Activated T-helper 1 cell treated with anti-CD3 and anti-CD28 coated beads, Interleukin-12 subunit alpha, Interleukin-12 subunit beta, Interleukin-2, Interleukin-4 antibody, amounts not matched to agents 30 ng/mL and 10 ng/mL and 1 ng/mL, durations not matched to agents 14 hours and 24 hours and 36 hours (primary cell): ENCODE measurements at regions of chr12 and their contacts with region 1.

Region 1: GRCh38 chr12:69470189-69471075 is at the start of gene FRS2:
- DNase-seq: peak; percentile 79
- H3K4me3 Mint-ChIP-seq: peak within 1 kb of the TSS; percentile 98
- H3K27ac Mint-ChIP-seq: peak within 1 kb of the TSS; percentile 97
- H3K4me1 Mint-ChIP-seq: peaks cover 50% of the 10 kb centered on the region
- H3K27me3 Mint-ChIP-seq: no peaks in the 10 kb centered on the region
- total RNA-seq, gene FRS2: 13.1 and 13.7 TPM in 2 replicates

Region 2: DNA sequence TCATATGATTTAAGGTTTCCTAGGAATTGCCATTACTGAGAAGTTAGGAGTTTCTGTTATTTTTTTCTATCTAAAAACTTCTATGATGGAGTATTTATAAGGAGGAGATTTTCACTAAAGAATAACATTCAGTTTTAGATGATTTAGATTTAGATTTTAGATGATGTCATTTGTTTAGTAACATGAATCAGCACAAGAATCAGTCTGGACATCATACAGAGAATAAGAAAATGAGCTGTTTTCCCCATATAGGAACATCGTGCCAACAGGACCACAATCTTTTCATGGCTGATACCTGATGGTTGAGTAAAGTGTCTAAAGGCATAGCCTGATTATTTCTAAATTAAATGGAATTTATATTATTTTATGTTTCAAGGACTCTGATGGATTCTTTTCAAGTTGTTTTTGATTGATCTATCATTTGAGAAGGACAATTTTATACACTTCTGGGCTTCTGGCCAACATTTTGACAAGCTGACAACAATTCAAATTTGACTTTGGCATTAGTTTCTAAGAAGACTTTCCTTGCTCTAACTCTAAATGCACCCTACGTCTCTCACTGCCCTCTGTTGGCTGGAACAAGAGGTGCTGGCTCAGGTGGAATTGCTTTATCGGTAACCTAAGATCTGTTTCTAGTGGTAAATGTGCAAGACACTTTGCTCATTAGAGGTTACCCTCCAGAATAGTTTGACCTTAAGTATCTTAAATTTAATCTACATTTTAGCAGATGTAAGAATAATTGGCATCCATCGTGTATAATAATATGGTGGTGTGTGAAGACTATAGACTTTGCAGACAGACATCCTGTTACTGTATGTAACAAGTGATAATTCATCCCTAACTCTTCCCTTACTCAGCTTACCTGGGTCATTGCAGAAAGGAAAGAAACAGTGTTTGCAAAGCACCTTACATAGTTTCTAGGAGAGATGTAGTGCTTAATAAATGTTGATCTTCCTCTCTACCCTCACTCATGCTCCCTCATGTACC is 273.8 kb before region 1 on chr12:
- intact Hi-C with region 1: no loop called
- DNase-seq: no peak
- H3K4me3 Mint-ChIP-seq: no peak overlapping the region
- H3K27ac Mint-ChIP-seq: no peak overlapping the region
- H3K4me1 Mint-ChIP-seq: no peaks in the 10 kb centered on the region
- H3K27me3 Mint-ChIP-seq: no peaks in the 10 kb centered on the region

Region 3: DNA sequence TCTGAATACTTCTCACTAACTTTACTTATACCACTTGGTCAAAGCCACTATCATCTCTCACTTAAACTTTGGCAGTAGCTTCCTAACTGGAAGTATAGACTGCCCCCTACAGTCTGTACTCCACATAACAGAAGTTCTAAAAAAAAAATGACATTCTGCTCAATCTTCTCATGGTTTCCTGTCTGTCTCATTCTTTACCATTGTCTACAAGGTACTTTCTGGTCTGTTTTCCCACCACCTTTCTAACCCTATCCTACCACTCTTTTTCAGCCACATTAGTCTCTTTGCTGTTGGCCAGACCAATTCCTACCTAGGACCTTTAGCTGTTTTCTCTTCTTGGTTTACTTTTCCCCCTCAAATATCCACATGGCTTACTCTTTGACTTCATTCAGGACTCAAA is 216.4 kb before region 1 on chr12:
- intact Hi-C with region 1: loop called (anchors 5 kb)
- DNase-seq: no peak
- H3K4me3 Mint-ChIP-seq: no peak overlapping the region
- H3K27ac Mint-ChIP-seq: peak overlapping the region; percentile 52
- H3K4me1 Mint-ChIP-seq: peaks cover 41% of the 10 kb centered on the region
- H3K27me3 Mint-ChIP-seq: no peaks in the 10 kb centered on the region

Region 4: DNA sequence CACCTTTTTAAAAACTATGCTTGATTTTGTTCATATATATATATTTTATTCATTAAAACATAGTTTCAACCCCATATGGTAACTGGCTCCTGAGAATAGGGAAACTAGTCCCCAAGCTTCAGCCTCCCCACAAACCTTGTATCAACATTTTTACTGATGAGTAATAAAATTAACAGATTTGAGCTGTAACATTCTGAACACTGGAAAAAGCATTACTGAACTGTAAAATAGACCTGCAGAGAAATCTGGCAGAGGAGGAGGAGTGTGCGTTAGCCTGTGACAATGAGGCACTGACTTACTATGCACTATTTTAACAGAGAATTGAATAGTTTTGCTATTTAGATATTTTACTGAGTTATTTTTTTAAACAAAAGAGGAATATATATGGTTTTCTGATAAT is 42.9 kb after region 1 on chr12:
- intact Hi-C with region 1: no loop called
- DNase-seq: no peak
- H3K4me3 Mint-ChIP-seq: no peak overlapping the region
- H3K27ac Mint-ChIP-seq: no peak overlapping the region
- H3K4me1 Mint-ChIP-seq: peaks cover 39% of the 10 kb centered on the region
- H3K27me3 Mint-ChIP-seq: no peaks in the 10 kb centered on the region

Region 5: GRCh38 chr12:69534389-69534822 is 64.0 kb after region 1 on chr12:
- intact Hi-C with region 1: loop called (anchors 1 kb)
- DNase-seq: peak; percentile 20
- H3K4me3 Mint-ChIP-seq: no peak overlapping the region
- H3K27ac Mint-ChIP-seq: peak overlapping the region; percentile 79
- H3K4me1 Mint-ChIP-seq: peaks cover 24% of the 10 kb centered on the region
- H3K27me3 Mint-ChIP-seq: no peaks in the 10 kb centered on the region

Region 6: DNA sequence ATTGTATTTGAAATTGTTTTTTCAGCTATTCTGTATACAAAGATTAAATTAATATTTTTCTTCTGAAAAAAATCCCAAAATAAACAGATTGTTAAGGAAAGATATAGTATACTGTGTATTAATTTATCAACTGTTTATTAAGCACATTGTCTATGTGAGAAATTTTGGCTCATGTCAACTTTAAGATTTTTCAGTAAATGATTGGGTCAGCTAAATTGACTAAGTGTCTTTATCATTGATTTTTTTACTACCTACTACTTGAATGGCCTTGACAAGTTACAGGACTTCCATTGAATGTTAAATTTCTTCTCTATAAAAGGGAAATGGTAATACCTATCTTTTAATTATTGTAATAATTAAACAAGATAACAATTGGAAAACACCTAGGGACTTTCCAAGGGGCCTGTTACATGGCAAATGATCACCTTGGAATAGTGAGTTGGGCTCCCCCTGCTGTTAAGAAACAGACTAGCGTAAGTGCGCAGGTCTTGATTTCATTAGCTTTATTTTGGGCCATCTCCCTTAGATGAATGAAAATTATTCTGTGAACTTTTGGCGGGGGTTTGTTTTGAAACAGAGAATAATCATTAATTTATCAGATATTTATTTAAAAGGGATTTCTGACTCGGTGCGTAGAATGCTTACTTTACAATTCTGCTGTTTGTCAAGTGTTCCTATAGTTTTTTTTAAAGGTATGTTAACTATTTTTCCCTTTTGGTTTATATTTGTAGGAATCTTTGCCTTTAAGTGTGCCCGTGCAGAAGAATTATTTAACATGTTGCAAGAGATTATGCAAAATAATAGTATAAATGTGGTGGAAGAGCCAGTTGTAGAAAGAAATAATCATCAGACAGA is 100.3 kb after region 1 on chr12:
- intact Hi-C with region 1: loop called (anchors 1 kb)
- DNase-seq: peak; percentile 38
- H3K4me3 Mint-ChIP-seq: no peak overlapping the region
- H3K27ac Mint-ChIP-seq: no peak overlapping the region
- H3K4me1 Mint-ChIP-seq: peaks cover 10% of the 10 kb centered on the region
- H3K27me3 Mint-ChIP-seq: no peaks in the 10 kb centered on the region

Region 7: DNA sequence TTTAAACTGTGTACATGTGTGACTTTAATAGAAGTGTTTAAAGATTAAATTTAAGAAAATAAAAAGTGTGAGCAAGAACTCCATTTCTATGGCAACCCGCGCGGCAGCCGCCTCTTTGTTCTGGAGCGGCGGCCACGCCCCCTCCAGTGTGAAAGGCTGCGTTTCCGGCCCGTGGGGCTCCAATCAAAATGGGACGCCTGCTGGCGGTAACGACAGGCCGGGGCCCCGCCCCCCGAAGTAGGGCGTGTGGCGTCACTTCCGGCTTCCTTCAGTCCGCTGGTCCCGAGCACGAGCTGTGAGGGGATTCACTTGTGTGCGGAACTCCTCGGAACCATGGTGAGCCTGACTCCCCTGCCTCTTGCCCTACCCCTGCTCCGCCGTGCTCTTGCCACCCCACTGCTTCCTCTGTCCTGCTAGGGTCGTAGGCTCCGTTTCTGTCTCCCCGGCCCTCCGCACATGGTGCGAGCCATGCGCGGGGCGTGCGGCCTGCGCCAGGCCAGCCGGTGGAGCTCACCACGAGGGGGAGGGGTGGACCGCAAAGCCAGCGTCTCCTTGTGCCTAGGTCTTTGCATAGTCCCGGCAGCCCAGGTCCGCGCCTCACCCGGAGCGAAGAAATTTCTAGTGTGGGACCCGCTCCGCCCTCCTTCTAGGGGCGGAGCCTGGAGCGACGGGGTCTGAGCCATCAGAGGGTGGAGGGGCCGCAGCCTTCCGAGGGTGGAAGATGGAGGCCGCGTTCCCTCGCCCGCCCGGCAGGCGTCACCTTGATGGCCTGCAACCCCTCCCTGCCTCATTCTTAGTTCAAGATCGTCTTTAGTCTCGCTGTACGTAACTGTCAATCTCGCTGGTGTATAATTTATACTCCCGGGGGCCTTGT is 115.0 kb after region 1 on chr12 and contains the start of gene CCT2:
- intact Hi-C with region 1: loop called (anchors 1 kb)
- DNase-seq: peak; percentile 94
- H3K4me3 Mint-ChIP-seq: peak within 1 kb of the TSS; percentile 98
- H3K27ac Mint-ChIP-seq: peak within 1 kb of the TSS; percentile 97
- H3K4me1 Mint-ChIP-seq: peaks cover 11% of the 10 kb centered on the region
- H3K27me3 Mint-ChIP-seq: no peaks in the 10 kb centered on the region
- total RNA-seq, gene CCT2: 442 and 447 TPM in 2 replicates

Region 8: DNA sequence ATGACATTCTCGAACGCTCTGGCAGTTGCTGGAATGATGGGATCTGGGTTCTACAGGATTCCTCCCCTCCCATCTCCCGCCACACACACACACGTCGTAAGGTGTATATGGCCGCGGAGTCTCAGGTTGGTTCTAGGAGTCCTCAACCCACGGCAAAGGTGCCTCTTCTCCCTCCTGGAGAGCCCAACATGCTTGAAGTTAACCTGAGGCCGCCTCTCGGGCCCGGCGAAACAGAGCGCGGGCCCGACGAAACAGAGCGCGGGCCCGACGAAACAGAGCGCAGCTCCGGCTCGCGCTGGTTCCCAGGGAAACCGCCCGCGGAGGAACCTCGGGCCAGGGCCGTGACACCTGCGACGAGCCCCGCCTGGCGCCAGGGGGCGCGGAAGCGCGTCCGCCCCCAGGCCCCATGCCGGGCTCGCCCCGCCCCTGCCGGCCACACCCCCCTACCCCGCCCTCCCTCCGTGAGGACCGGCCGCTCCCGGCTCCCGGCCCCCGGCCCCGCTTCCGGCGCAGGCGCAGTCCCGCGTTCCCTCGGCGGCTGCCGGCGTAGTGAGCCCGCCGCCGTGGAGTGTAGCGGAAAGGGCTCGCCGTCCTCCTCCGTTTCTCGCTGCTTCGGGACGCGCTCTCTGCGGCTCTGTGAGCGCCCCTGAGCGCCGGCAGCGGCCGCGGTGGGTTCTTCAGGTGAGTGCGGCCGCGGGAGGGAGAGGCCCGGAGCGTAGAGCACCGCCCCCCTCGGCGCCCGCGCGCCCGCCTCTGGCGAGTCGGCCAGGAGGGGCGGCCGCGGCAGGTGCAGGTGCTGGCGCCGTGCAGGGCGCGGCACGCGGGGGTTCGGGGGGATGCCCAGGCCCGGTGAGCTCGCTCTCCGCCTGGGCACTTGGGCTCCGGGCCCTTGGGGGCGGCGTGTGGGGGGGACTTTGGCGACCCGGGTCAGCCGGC is 268.2 kb after region 1 on chr12 and contains the start of gene RAB3IP:
- intact Hi-C with region 1: loop called (anchors 5 kb)
- DNase-seq: peak; percentile 88
- H3K4me3 Mint-ChIP-seq: peak within 1 kb of the TSS; percentile 95
- H3K27ac Mint-ChIP-seq: peak within 1 kb of the TSS; percentile 92
- H3K4me1 Mint-ChIP-seq: peaks cover 31% of the 10 kb centered on the region
- H3K27me3 Mint-ChIP-seq: peaks cover 36% of the 10 kb centered on the region
- total RNA-seq, gene RAB3IP: 29.8 and 36.1 TPM in 2 replicates

Region 9: DNA sequence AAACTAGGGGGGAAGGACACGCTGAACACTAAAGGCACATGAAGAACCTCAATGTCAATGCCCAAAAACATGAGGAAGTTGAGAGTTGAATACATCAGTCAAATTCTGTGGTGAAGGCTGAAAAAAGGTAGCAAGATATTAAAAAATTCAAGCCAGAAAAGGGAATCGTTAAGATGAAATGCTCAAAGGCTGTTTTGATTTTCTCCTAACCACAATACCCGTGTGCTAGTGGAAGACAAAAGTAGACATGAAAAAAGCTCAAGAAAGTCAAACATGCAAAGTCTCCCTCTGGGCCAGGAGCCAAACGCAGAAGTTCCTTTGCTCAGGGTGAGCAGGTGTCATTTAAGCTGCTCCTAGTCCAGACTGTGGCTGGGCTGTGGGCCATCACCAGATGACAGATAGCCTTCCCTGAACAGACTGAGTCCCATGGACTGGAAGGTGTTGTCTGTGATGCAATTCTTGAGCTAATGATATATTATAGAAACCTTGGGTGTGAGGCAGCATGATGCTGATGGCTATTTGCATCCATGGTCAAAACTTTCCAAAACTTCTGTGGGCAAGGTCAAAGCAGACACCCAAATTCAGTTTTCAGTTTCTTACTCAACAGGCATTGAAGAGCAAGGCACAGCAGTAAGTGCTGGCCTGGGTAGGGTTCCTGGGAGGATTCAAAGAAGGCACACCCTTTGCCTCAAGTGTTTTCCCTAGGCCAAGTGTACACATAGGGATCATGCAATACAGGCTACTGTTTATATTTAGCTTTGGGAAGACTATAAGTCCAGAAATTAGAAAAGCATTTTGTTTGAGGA is 436.2 kb after region 1 on chr12:
- intact Hi-C with region 1: no loop called
- DNase-seq: no peak
- H3K4me3 Mint-ChIP-seq: no peak overlapping the region
- H3K27ac Mint-ChIP-seq: no peak overlapping the region
- H3K4me1 Mint-ChIP-seq: no peaks in the 10 kb centered on the region
- H3K27me3 Mint-ChIP-seq: peaks cover 2% of the 10 kb centered on the region

Region 10: DNA sequence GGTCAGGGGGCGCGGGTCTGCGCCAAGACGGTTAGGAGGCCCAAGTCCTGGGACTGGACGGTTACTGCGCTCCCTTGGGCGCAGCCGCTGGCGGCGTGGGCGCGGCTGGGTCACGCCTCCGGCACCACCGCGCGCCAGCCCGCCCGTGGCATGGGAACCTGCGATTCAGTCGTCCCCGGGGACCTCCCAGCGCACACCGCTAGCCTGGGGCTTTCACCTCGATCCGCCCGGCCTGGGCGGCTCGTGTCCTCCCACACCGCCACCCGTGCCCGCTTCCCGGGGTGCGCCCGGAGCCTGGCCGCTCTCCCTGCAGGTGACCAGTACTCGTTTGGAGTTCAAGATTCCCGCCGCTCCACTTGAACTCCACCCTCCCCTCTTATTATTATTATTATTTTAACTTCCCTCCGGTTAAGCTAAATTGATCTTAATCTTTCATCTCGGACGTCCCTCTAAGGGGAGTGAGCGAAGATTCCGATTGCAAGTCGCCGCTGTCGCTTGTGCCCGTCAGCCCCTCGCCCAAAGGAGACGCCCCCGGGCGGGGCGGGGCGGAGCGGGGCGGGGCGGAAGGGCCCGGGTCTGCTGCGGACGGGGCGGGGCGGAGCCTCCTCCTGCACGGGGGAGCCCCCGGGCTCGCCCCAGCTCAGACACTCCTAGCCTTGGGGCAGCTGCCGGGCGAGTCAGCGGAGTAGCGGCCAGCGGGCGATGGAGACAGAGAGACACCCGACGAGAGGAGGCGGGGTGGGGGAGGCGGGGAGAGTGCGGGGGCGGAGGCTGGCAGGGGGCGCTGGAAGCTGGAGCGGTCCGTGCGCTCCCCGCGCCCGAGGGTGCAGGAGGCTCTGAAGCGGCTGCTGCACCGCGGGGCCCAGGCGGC is 895.5 kb after region 1 on chr12 and contains the start of gene KCNMB4:
- intact Hi-C with region 1: loop called (anchors 5 kb)
- DNase-seq: peak; percentile 71
- H3K4me3 Mint-ChIP-seq: peak within 1 kb of the TSS; percentile 87
- H3K27ac Mint-ChIP-seq: peak within 1 kb of the TSS; percentile 63
- H3K4me1 Mint-ChIP-seq: peaks cover 20% of the 10 kb centered on the region
- H3K27me3 Mint-ChIP-seq: peaks cover 44% of the 10 kb centered on the region
- total RNA-seq, gene KCNMB4: 0.17 and 0.80 TPM in 2 replicates